KBM-7 (cell line): ENCODE measurements at regions of chr12 and their contacts with region 1.

Region 1: GRCh38 chr12:52879394-52880351 is 25.2 kb downstream of the KRT8 start:
- DNase-seq: peak; percentile 81

Region 2: DNA sequence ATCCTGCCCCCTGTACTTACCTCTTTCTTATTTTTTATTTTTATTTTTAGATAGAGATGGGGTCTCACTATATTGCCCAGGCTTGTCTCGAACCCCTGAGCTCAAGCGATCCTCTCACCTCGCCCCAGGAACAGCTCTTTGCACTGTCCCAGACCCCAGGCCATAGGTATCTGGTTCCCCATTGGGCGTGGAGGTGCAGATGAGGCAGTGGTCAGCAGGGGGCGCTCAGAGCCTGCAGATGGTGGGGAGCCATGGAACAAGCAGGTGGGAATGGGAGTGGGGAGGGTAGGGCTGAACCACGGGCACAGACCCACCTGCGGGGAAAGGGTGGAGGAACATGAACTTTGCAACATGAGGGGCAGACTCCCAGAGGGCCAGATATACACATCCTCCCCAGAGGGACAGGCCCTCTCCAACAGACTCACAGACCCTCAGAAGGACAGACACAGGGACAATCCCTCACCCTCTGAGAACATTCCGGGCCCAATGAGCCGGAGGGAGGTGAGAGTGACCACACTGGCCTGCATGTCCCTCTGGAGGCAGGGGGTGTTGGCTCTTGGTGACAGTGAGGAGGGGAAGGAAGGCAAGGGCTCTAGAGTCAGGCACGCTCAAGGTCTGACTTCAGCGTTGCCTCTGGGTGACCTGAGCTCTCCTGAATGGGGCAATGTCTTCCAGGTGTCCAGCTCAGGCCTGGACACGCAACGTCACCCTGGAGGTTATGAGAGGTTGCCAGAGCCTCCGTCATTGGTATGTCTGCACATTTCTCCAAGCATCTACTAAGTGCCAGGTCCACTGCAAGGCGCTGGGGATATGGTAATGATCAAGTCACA is 722.7 kb before region 1 on chr12:
- in situ Hi-C with region 1: loop called (anchors 10 kb)
- DNase-seq: peak; percentile 74

Region 3: GRCh38 chr12:52372216-52373154 is 507.2 kb before region 1 on chr12:
- in situ Hi-C with region 1: loop called (anchors 10 kb)
- DNase-seq: peak; percentile 72

Region 4: GRCh38 chr12:52398176-52398829 is 481.4 kb before region 1 on chr12:
- in situ Hi-C with region 1: no loop called
- DNase-seq: no peak

Region 5: DNA sequence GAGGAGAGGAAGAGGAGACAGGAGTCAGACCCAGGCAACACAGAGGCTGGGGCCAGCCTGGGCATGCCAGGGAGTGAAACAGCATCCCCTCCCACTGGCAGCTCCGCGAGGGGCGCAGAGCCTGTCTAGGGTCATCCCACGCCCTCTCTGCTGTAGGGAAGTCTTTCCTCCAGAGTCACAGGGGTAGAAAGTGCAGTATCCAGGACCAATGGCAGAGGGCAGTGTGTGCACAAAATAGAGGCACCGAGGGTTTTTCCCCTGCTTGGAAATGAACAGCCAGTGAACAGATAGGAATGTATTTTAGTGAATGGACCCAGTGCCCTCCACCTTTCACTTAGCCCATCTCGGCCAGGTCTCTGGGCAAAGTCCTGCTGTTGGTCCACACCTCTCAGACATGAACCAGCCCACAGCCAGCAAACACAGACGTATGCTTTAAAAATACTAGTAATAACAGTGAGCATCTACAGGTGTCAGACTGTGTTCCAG is 296.7 kb before region 1 on chr12:
- in situ Hi-C with region 1: loop called (anchors 10 kb)
- DNase-seq: peak; percentile 82

Region 6: GRCh38 chr12:52980693-52981423 is 101.2 kb after region 1 on chr12:
- in situ Hi-C with region 1: loop called (anchors 10 kb)
- DNase-seq: peak; percentile 94

Region 7: DNA sequence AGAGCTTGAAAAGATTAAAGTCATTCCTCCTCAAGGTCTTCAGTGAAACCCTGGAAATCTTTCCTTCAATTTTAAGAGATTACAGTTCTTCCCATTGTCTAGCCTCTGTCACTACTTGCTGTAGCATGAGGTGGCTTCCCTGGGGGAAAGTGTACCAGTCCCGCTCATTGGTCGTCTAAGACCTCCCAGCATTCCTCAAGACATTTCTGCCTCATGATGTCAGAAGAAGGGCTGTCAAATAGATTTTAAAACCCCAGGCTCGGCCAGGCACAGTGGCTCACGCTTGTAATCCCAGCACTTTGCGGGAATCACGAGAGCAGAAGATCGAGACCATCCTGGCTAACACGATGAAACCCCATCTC is 1262.4 kb after region 1 on chr12:
- in situ Hi-C with region 1: no loop called
- DNase-seq: no peak